Right lobe of liver (tissue), 6 donors: ENCODE measurements at regions of chr9 and their contacts with region 1.

Region 1: GRCh38 chr9:134738869-134739659 is 97.5 kb downstream of the COL5A1 start:
- DNase-seq: peak in 2 of 3 donors; percentile 62 to 66
- ATAC-seq: peak; percentile 71 to 86 (median 80)
- H3K4me3 ChIP-seq: no peak overlapping the region
- H3K27ac ChIP-seq: no peak overlapping the region
- H3K4me1 ChIP-seq: no peaks in the 10 kb centered on the region
- H3K27me3 ChIP-seq: no peaks in the 10 kb centered on the region
- CTCF ChIP-seq: peak; percentile 66 to 79 (median 74)
- POLR2A ChIP-seq: no peak

Region 2: DNA sequence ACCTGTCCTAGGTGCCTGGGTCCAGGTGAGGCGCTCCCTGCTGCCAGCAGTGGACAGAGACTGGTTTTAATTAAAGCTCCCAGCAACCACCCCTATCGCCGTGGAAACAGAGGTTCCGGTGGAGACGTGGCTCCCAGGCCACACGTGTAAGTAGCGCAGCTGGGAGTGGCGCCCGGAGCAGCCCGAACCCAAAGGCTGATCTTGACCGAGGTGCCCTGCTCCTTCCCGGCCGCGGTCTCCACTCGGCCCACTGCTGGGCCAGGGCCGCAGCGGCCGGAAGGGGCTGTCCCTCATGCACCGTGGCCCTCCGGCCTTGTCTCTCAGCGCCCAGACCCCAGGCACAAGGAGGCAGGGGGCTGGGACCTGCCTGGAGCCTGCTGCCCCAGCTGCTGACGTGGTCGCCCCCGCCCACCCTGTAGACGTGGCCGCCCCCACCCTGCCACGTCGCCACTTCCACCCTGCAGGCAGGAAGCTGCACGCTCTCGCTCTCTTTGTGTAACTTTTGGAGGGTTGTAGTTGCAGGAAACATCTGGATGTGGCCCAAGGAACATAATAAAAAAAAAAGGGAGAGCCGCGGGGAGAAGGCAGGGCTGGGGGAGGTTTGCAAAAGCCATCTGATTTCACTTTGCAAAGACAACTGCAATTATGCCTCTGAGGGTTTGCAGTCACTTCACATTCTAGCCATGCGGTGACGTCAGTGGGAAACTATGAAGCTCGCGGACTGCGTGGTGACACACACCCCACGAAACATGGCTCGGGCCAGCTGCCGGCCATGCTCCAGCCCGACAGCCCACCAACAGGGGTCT is 282.9 kb before region 1 on chr9:
- intact Hi-C with region 1: loop called in 1 of 2 experiments (anchors 10 kb)
- DNase-seq: peak; percentile 70 to 87 (median 82)
- ATAC-seq: peak; percentile 63 to 85 (median 76)
- H3K4me3 ChIP-seq: peak overlapping the region in 2 of 3 donors; percentile 14 to 36
- H3K27ac ChIP-seq: peak overlapping the region; percentile 70 to 93 (median 74)
- H3K4me1 ChIP-seq: no peaks in the 10 kb centered on the region
- H3K27me3 ChIP-seq: no peaks in the 10 kb centered on the region
- CTCF ChIP-seq: no peak
- POLR2A ChIP-seq: no peak

Region 3: DNA sequence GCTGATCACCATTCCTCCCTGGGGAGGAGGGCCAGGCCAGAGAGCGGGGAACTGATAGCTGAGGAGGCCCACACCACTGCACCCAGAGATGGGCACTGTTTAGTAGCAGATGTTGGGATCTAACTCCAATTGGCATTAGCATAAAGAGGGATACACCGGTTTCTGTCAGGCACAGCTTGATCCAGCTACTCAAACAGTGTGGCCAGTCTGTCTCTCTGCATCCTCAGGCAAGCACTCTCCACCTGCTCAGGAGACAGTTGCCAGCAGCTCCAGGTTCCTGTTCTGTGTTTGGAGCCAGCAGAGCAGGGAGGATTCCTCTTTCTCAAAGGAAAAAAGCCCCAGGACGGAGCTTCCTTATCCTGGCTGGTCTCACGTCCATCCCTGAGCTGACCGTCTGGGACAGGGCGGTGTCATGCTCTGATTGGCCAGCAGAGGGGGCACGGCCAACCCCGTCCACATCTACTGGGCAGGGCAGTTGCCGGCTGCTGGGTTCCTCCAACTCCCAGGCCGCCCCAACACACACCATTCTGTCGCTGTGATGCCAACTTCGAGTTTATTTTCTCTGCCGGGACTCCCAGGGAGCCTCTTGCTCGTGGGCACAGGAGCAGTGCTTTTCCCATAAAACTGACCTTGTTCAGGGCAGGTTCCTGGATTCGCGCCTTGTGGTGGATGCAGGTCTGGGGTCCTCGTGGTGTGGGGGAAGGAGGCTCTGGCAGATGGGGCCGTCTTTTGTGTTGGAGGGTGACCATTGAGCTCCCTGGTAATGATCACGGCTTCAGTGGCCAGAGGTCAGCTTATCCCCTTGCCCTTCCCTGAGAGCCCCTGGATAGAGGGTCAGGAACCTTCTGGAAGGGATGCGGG is 49.5 kb before region 1 on chr9:
- intact Hi-C with region 1: loop called in 1 of 2 experiments (anchors 5 kb)
- DNase-seq: peak in 2 of 3 donors; percentile 62 to 71
- ATAC-seq: peak; percentile 74 to 89 (median 84)
- H3K4me3 ChIP-seq: no peak overlapping the region
- H3K27ac ChIP-seq: no peak overlapping the region
- H3K4me1 ChIP-seq: no peaks in the 10 kb centered on the region
- H3K27me3 ChIP-seq: no peaks in the 10 kb centered on the region
- CTCF ChIP-seq: peak; percentile 45 to 83 (median 61)
- POLR2A ChIP-seq: no peak